ENCODE measurements at regions of chr15 and their contacts with region 1.

Region 1: GRCh38 chr15:85582131-85583079 is 202.0 kb downstream of the AKAP13 start:
- DNase-seq: peak; percentile 78
- ATAC-seq: peak; percentile 65
- H3K4me3 ChIP-seq: peak overlapping the region; percentile 1 to 42 (median 34)
- H3K4me3 Mint-ChIP-seq: peak overlapping the region; percentile 85
- H3K27ac ChIP-seq: peak overlapping the region; percentile 84 to 94
- H3K27ac Mint-ChIP-seq: peak overlapping the region; percentile 94
- H3K4me1 ChIP-seq: peaks cover 55 to 58% of the 10 kb centered on the region in 2 donors
- H3K4me1 Mint-ChIP-seq: peaks cover 67% of the 10 kb centered on the region
- H3K27me3 ChIP-seq: no peaks in the 10 kb centered on the region
- H3K27me3 Mint-ChIP-seq: no peaks in the 10 kb centered on the region
- CTCF ChIP-seq: no peak

Region 2: DNA sequence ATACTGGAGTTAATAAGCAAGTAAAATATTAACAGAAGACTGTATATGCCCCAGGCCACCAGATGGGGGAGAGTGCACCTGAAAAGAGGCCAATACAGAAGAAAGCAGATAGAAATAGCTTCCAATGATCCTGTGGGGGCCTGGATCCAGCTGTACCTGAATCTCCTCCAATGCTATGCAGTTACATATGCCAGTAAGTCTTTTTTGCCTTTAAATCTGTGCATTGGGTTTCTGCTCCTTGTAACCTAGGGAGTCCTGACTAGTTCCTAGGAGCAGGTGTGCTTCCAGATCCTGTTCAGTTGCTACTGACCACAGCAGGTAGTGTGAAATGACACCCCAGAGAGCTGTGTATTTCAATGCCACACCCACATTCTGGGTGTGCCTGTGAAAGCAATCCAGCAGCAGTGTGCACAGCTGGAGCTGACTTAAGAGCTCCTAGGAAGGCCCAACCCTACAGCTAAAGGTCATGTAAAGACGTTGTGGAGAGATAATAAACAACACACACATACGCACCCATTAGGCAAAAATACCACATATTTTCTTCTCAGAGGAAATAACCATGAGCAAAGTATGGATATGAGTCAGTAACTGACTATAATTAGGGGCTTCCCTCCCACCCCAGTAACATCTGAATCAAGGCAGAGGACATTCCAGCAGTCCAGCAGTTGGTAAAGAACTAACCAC is 264.2 kb before region 1 on chr15:
- CTCF ChIA-PET with region 1: no interaction called
- POLR2A ChIA-PET with region 1: no interaction called
- intact Hi-C with region 1: loop called (anchors 10 kb)
- DNase-seq: peak; percentile 42
- ATAC-seq: peak; percentile 90
- H3K4me3 ChIP-seq: no peak overlapping the region
- H3K4me3 Mint-ChIP-seq: peak overlapping the region; percentile 46
- H3K27ac ChIP-seq: peak overlapping the region; percentile 20 to 29
- H3K27ac Mint-ChIP-seq: peak overlapping the region; percentile 83
- H3K4me1 ChIP-seq: peaks cover 39 to 40% of the 10 kb centered on the region in 2 donors
- H3K4me1 Mint-ChIP-seq: peaks cover 63% of the 10 kb centered on the region
- H3K27me3 ChIP-seq: no peaks in the 10 kb centered on the region
- H3K27me3 Mint-ChIP-seq: no peaks in the 10 kb centered on the region
- CTCF ChIP-seq: peak; percentile 29

Region 3: GRCh38 chr15:85407804-85408746 is 174.3 kb before region 1 on chr15:
- CTCF ChIA-PET with region 1: no interaction called
- POLR2A ChIA-PET with region 1: no interaction called
- intact Hi-C with region 1: loop called (anchors 1 kb)
- DNase-seq: peak; percentile 81
- ATAC-seq: peak; percentile 65
- H3K4me3 ChIP-seq: peak overlapping the region in 4 of 5 experiments; percentile 2 to 57 (median 35)
- H3K4me3 Mint-ChIP-seq: peak overlapping the region; percentile 84
- H3K27ac ChIP-seq: peak overlapping the region; percentile 83 to 88
- H3K27ac Mint-ChIP-seq: peak overlapping the region; percentile 96
- H3K4me1 ChIP-seq: peaks cover 87 to 90% of the 10 kb centered on the region in 2 donors
- H3K4me1 Mint-ChIP-seq: peaks cover 80% of the 10 kb centered on the region
- H3K27me3 ChIP-seq: no peaks in the 10 kb centered on the region
- H3K27me3 Mint-ChIP-seq: no peaks in the 10 kb centered on the region
- CTCF ChIP-seq: no peak

Region 4: GRCh38 chr15:85534031-85534430 is 48.4 kb before region 1 on chr15:
- CTCF ChIA-PET with region 1: interaction called, 4 read pairs
- POLR2A ChIA-PET with region 1: no interaction called
- intact Hi-C with region 1: loop called (anchors 2 kb)
- DNase-seq: peak; percentile 69
- ATAC-seq: peak; percentile 75
- H3K4me3 ChIP-seq: peak overlapping the region in 2 of 5 experiments; percentile 11 to 23
- H3K4me3 Mint-ChIP-seq: peak overlapping the region; percentile 77
- H3K27ac ChIP-seq: peak overlapping the region; percentile 78 to 81
- H3K27ac Mint-ChIP-seq: peak overlapping the region; percentile 100
- H3K4me1 ChIP-seq: peaks cover 67 to 74% of the 10 kb centered on the region in 2 donors
- H3K4me1 Mint-ChIP-seq: peaks cover 79% of the 10 kb centered on the region
- H3K27me3 ChIP-seq: no peaks in the 10 kb centered on the region
- H3K27me3 Mint-ChIP-seq: no peaks in the 10 kb centered on the region
- CTCF ChIP-seq: no peak

Region 5: DNA sequence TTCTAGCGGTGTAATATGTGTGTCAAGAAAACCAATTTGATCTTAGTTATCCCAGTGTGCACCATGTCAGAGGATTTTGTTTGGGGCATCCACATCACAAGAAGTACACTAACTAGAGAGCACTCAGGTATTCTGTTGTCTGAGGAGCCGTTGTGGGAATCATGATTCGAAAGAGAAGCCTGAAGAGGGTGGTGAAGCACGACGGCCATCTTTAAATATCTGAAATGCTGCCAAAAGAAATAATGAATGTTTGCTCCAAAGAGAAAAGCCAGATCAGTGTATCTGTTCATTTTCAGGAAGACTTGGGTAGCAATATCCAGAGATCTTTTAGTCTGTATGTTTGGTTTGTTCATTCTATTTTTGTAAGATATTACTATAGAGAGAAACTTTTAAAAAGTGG is 31.7 kb after region 1 on chr15:
- CTCF ChIA-PET with region 1: no interaction called
- POLR2A ChIA-PET with region 1: no interaction called
- intact Hi-C with region 1: no loop called
- DNase-seq: no peak
- ATAC-seq: no peak
- H3K4me3 ChIP-seq: no peak overlapping the region
- H3K4me3 Mint-ChIP-seq: no peak overlapping the region
- H3K27ac ChIP-seq: no peak overlapping the region
- H3K27ac Mint-ChIP-seq: no peak overlapping the region
- H3K4me1 ChIP-seq: peaks cover 12 to 14% of the 10 kb centered on the region in 2 donors
- H3K4me1 Mint-ChIP-seq: peaks cover 8% of the 10 kb centered on the region
- H3K27me3 ChIP-seq: no peaks in the 10 kb centered on the region
- H3K27me3 Mint-ChIP-seq: no peaks in the 10 kb centered on the region
- CTCF ChIP-seq: no peak

Region 6: GRCh38 chr15:85689729-85690128 is 107.3 kb after region 1 on chr15:
- CTCF ChIA-PET with region 1: no interaction called
- POLR2A ChIA-PET with region 1: interaction called, 3 read pairs
- intact Hi-C with region 1: loop called (anchors 5 kb)
- DNase-seq: peak; percentile 75
- ATAC-seq: peak; percentile 68
- H3K4me3 ChIP-seq: peak overlapping the region; percentile 76 to 95 (median 81)
- H3K4me3 Mint-ChIP-seq: peak overlapping the region; percentile 98
- H3K27ac ChIP-seq: peak overlapping the region; percentile 84 to 85
- H3K27ac Mint-ChIP-seq: peak overlapping the region; percentile 98
- H3K4me1 ChIP-seq: peaks cover 68 to 70% of the 10 kb centered on the region in 2 donors
- H3K4me1 Mint-ChIP-seq: peaks cover 74% of the 10 kb centered on the region
- H3K27me3 ChIP-seq: no peaks in the 10 kb centered on the region
- H3K27me3 Mint-ChIP-seq: no peaks in the 10 kb centered on the region
- CTCF ChIP-seq: no peak